Activated B cell treated with CpG ODN at 0.5 μM for 24 hours (primary cell): ENCODE measurements at regions of chr11 and their contacts with region 1.

Region 1: DNA sequence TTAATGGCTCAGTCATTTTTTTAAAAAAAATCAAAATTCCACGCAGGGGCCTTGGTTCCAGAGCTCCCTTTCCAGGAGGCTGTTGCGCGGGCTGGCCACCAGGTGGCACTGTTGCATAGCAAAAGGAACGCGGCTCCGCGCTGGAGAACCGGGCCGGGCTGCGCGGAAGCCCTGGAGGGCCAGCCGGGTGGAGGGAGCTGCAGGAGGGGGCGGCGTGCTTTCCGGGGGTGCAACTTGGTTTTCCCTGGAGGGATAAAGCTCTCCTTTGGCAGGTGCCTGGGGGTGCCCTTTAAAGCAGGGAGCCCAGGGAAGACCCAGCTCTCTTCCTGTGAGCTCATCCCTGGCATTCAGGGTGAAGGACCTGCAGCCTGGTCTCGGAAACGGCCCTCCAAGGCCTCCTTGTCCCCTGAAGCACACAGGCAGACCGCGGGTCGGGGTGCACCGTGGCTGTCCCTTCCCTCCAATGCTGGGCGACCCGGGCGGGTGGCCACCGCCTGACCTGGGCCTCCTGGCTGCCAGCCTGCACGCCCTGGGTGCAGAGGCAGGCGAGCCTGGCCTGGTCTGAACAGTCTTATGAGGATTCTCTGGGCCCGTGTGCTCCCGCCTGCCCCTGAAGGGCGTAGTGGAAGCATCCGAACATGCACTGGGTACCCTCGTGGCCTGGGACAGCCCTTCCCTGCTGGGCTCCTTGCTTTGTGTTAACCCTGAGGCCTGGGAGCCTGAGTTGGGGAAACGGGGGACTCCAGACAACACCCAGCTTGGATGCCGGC is 23.4 kb downstream of the KRTAP5-5 start:
- DNase-seq: peak; percentile 74
- ATAC-seq: peak; percentile 91
- H3K4me3 Mint-ChIP-seq: no peak overlapping the region
- H3K27ac Mint-ChIP-seq: no peak overlapping the region
- H3K4me1 Mint-ChIP-seq: no peaks in the 10 kb centered on the region
- H3K27me3 Mint-ChIP-seq: peaks cover 24% of the 10 kb centered on the region
- CTCF ChIP-seq: peak; percentile 80

Region 2: GRCh38 chr11:1640076-1640946 is 12.6 kb before region 1 on chr11:
- CTCF ChIA-PET with region 1: interaction called, 13 read pairs
- POLR2A ChIA-PET with region 1: no interaction called
- intact Hi-C with region 1: no loop called
- DNase-seq: no peak
- ATAC-seq: no peak
- H3K4me3 Mint-ChIP-seq: no peak overlapping the region
- H3K27ac Mint-ChIP-seq: no peak overlapping the region
- H3K4me1 Mint-ChIP-seq: peaks cover 2% of the 10 kb centered on the region
- H3K27me3 Mint-ChIP-seq: peaks cover 26% of the 10 kb centered on the region
- CTCF ChIP-seq: no peak

Region 3: DNA sequence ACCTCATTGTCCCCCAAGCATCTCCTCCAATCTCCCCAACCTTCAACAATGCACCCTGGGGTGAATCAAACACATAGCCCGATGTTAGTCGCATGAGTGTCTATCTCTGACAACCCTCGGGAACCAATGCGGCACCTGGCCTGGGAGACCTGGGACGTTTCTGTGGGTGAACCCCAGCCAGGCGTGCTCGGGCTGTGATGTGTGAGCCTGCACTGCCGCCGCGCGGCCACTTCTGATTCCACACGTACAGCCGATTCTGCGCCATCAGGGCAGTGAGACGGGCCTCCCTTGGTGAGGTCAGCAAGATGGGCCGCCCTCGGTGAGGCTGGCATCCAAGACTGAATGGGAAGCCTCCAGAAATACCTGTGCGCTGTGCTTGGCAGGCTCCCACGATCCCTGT is 349.9 kb after region 1 on chr11:
- CTCF ChIA-PET with region 1: interaction called, 40 read pairs
- POLR2A ChIA-PET with region 1: no interaction called
- intact Hi-C with region 1: no loop called
- DNase-seq: no peak
- ATAC-seq: peak; percentile 31
- H3K4me3 Mint-ChIP-seq: no peak overlapping the region
- H3K27ac Mint-ChIP-seq: no peak overlapping the region
- H3K4me1 Mint-ChIP-seq: no peaks in the 10 kb centered on the region
- H3K27me3 Mint-ChIP-seq: no peaks in the 10 kb centered on the region
- CTCF ChIP-seq: no peak

Region 4: GRCh38 chr11:2484576-2485125 is 831.7 kb after region 1 on chr11:
- CTCF ChIA-PET with region 1: no interaction called
- POLR2A ChIA-PET with region 1: no interaction called
- intact Hi-C with region 1: no loop called
- DNase-seq: no peak
- ATAC-seq: no peak
- H3K4me3 Mint-ChIP-seq: no peak overlapping the region
- H3K27ac Mint-ChIP-seq: no peak overlapping the region
- H3K4me1 Mint-ChIP-seq: peaks cover 29% of the 10 kb centered on the region
- H3K27me3 Mint-ChIP-seq: no peaks in the 10 kb centered on the region
- CTCF ChIP-seq: no peak